Endothelial cell of umbilical vein (primary cell): ENCODE measurements at regions of chr11 and their contacts with region 1.

Region 1: DNA sequence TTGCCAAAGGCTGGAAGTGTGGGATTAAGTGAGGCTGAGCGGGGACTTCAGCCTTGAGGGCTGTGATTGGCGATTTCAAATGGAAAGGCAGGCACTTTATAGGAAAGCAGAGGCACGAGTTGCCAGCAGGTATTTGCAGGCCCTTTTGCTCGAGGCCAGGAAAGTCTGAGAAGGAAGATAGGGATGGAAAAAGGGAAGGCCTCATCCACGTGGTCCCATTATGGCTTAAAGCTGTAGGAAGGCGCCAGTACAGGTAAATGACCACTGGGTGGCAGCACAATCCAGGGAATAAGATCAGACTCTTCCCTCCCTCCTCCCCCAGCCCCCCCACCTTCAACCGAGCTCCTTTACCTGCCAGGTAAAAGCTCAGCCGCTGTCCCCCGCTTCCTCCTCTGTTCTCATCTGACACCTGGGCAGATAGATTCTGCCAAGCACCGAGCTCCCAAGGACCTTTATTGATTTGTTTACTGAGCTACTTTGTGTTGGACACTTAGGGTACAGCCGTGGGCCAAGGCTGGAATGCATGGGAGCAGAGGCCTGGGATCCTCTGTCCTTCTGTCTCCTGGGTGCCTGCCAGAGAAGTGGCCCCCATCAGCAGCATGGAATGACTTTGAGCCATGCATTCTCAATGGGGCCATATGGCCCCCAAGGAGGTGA is 7.5 kb downstream of the P2RX3 start:
- DNase-seq: peak; percentile 60
- H3K4me3 ChIP-seq: no peak overlapping the region
- H3K27ac ChIP-seq: no peak overlapping the region
- H3K4me1 ChIP-seq: no peaks in the 10 kb centered on the region
- H3K27me3 ChIP-seq: no peaks in the 10 kb centered on the region
- CTCF ChIP-seq: peak; percentile 49 to 71
- POLR2A ChIP-seq: no peak

Region 2: GRCh38 chr11:57358543-57358961 is 12.9 kb after region 1 on chr11:
- CTCF ChIA-PET with region 1: interaction called, 13 read pairs
- POLR2A ChIA-PET with region 1: interaction called, 4 read pairs
- dilution Hi-C with region 1: no loop called
- intact Hi-C with region 1: no loop called
- DNase-seq: no peak
- H3K4me3 ChIP-seq: no peak overlapping the region
- H3K27ac ChIP-seq: no peak overlapping the region
- H3K4me1 ChIP-seq: no peaks in the 10 kb centered on the region
- H3K27me3 ChIP-seq: peaks cover 0 to 5% of the 10 kb centered on the region in 2 experiments
- CTCF ChIP-seq: no peak
- POLR2A ChIP-seq: no peak

Region 3: DNA sequence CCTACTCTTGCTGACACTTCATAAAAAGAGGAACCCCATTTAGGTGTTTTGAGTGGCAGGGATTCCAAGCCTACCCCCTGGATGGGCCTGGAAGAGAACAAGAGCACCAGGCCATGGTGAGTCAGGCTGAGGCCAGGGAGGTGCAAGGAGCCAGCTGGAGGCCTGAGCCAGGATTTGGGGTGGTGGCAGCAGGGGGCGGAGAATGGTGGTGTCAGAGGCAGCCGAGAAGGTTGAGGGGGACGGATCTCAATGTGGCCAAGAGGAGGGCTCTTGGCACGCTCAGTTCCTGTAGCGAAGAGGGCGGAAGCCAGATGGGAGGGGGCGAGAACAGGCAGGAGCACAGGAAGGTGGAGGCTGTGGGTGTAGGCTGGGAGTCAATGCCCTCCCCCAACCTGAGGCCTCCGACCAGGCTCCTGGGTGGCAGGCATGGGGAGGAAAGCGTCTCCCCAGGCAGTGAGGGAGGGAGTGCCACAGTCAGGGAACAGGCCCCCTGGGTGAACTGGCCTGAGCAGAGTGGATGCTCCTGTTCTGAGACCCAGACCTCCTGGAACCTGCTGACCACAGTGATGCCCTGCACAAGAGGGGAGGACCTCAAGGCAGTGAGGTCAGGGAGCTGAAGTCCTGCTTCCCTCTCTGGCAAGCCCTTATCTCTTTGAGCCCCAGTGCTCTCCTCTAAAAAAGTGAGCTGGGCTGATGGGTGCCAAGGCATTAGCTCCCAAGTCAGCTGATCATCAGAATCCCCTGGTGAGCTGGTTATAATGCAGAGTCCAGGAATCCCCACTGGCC is 128.5 kb after region 1 on chr11:
- CTCF ChIA-PET with region 1: interaction called, 19 read pairs
- POLR2A ChIA-PET with region 1: no interaction called
- dilution Hi-C with region 1: no loop called
- intact Hi-C with region 1: no loop called
- DNase-seq: no peak
- H3K4me3 ChIP-seq: no peak overlapping the region
- H3K27ac ChIP-seq: no peak overlapping the region
- H3K4me1 ChIP-seq: peaks cover 7% of the 10 kb centered on the region
- H3K27me3 ChIP-seq: peaks cover 5 to 27% of the 10 kb centered on the region in 2 experiments
- CTCF ChIP-seq: no peak
- POLR2A ChIP-seq: no peak

Region 4: GRCh38 chr11:57493507-57494503 is 148.1 kb after region 1 on chr11:
- CTCF ChIA-PET with region 1: interaction called, 14 read pairs
- POLR2A ChIA-PET with region 1: no interaction called
- dilution Hi-C with region 1: no loop called
- intact Hi-C with region 1: no loop called
- DNase-seq: peak; percentile 42
- H3K4me3 ChIP-seq: no peak overlapping the region
- H3K27ac ChIP-seq: no peak overlapping the region
- H3K4me1 ChIP-seq: no peaks in the 10 kb centered on the region
- H3K27me3 ChIP-seq: no peaks in the 10 kb centered on the region
- CTCF ChIP-seq: peak; percentile 85 to 91
- POLR2A ChIP-seq: no peak

Region 5: DNA sequence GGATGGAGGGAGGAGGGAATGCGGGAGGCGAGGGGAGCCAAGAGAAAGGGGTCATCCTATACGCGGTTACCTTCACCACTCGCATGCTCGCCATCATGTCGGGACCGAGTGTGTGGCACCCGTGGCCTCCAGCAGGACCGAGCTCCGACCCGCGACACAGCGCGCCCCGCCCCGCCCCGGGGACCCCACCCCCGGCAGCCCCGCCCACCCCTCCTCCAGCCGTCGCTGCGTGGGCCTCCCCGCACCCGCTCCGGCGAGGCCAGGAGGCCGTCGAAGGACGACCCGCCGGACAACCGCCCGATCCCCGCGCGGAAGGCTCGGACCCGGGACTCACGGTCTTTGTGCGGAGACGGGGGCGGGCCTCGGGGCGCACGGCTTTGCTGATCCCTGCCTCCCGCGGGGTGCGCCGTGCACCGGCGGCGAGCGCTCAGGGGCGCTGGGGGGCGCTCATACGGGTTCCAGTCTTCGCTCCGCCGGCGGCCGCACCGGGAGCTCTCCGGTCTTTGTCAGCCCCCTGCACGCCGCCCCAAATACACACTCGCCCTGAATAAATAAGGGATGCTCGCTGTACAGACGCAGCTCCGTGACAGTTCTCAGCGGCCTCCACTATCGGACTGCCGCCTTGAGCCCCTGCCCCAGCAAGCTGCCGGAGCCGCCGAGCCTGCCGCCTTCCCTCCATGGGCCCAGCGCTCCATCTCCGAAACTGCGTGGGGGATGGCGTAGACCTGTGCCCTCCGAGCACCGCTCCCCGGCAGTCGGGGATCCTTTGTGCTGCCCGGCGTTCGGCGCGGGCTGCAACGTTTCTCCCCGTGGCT is 222.0 kb after region 1 on chr11 and contains the start of gene UBE2L6:
- CTCF ChIA-PET with region 1: interaction called, 16 read pairs
- POLR2A ChIA-PET with region 1: no interaction called
- dilution Hi-C with region 1: no loop called
- intact Hi-C with region 1: loop called (anchors 1 kb)
- DNase-seq: no peak
- H3K4me3 ChIP-seq: peak within 1 kb of the TSS; percentile 56 to 86 (median 76)
- H3K27ac ChIP-seq: no peak within 1 kb of the TSS
- H3K4me1 ChIP-seq: peaks cover 10% of the 10 kb centered on the region
- H3K27me3 ChIP-seq: no peaks in the 10 kb centered on the region
- CTCF ChIP-seq: peak; percentile 33 to 93
- POLR2A ChIP-seq: no peak
- total RNA-seq, gene UBE2L6: 10.8 and 22.3 TPM in 2 replicates

Region 6: DNA sequence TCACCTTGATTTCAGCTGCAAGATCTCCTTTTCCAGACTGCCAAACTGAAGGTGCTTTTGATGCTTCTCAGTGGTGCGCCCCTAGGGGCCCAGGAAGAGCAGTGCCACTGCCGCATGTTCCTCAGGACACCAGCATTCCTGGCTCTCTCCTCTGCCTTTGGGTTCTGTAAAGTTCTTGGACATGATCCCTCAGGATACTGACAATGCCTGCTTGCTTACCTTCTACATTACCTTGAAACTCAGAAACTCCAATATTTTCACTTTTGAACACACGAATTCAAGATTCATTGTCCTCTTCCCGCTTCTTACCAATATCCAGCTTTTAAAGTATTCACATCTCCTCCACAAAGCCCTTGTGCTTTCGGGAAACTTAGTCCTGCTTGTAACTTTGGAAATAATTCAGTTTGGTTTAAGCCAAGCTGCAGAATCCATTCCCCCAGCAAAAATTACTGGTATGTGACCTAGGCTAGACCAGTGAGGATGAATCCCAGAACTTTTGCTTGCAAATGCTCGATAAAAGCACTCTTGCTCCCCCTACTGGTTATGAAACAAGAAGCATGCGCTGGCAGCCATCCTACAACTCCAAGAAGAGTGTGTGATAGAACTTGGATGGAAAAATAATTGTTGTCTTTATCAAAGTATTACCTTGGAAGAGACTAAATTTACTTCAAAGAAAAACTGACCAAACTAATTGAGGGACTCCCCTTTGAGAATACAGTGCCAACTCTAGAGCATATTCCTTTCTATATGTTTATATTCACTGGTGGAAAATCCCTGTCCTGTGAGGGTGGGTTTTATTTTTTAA is 1178.8 kb after region 1 on chr11:
- CTCF ChIA-PET with region 1: no interaction called
- POLR2A ChIA-PET with region 1: no interaction called
- dilution Hi-C with region 1: no loop called
- intact Hi-C with region 1: loop called (anchors 5 kb)
- DNase-seq: peak; percentile 85
- H3K4me3 ChIP-seq: no peak overlapping the region
- H3K27ac ChIP-seq: no peak overlapping the region
- H3K4me1 ChIP-seq: no peaks in the 10 kb centered on the region
- H3K27me3 ChIP-seq: peaks cover 11 to 12% of the 10 kb centered on the region in 2 experiments
- CTCF ChIP-seq: peak; percentile 62 to 84
- POLR2A ChIP-seq: no peak